CD4-positive, alpha-beta memory T cell (primary cell): ENCODE measurements at regions of chr15 and their contacts with region 1.

Region 1: DNA sequence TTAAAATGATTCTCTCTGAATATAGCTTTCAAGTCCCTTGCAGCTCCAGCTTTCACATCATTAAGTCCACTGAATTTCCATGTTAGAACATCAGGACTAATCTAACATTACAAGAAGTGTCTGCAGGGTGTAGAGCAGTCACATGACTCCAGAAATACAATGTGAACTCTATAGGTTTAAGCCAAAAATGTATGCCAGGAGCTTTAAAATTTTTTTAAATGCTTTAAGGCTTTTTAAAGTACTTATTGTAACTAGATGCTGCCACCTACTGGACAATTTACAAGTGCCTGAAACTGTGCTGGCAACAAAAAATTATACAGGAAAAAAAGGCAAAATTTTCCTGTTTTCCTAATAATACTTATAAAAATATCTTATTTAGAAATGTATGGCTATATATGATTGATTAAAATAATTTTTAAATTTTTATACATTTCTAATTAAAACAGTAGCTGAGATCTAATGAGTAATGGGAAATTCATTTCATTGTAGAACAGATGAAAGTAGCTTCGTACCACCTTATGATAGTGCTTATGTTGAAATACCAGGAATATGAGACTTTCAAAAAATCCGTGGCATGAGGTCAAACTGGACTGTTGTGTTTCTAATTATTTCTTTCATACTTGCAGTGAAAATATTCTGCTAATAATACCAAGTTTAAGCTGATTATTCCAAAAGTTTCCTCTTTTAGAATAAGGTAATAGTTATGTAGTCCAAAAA is 25.7 kb downstream of the FSIP1 start:
- DNase-seq: peak in 4 of 5 donors; percentile 50 to 56 (median 54)
- H3K4me3 ChIP-seq: no peak overlapping the region
- H3K4me3 Mint-ChIP-seq: no peak overlapping the region
- H3K27ac ChIP-seq: no peak overlapping the region
- H3K27ac Mint-ChIP-seq: no peak overlapping the region
- H3K4me1 ChIP-seq: no peaks in the 10 kb centered on the region
- H3K4me1 Mint-ChIP-seq: no peaks in the 10 kb centered on the region
- H3K27me3 ChIP-seq: no peaks in the 10 kb centered on the region
- H3K27me3 Mint-ChIP-seq: peaks cover 0 to 3% of the 10 kb centered on the region in 2 donors

Region 2: DNA sequence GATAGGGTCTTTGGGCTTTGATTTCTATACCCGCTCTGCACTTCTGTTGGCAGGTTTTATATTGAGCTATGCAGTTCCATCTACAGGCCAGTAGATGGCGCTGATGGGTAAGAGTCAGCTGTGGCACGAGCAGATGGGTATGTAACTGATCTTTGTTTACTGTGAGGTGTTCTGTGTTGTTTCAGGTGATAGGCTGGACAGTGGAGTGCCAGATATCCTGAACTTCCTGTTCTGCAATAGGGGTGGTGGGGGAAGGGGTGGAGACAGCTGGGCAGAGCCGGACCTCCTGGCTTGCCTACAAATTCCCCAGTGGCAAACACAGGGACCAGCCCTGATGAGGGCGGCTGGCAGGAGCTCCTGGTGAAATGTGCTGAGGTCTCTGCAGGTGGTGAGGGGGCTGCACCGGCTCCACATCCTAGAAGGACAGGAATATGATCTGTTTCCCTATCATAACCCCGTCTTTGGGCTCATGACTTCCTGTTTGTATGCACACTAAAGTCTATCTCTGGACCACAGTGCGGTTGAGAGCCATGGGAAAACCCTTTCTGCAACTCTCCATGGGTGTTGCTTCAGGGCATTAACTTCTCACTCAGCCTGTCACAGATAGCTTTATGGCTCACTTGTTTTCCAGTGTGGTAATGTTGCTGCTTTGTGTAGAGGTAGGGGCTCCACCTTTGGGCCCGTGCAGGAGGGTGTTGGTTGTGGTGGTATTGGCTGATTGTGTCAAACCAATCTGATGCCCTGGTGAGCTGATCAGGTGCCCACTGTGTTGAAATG is 1316.4 kb before region 1 on chr15:
- CTCF ChIA-PET with region 1: interaction called, 6 read pairs
- POLR2A ChIA-PET with region 1: no interaction called
- intact Hi-C with region 1: loop called (anchors 10 kb)
- DNase-seq: peak in 4 of 5 donors; percentile 59 to 66 (median 62)
- H3K4me3 ChIP-seq: no peak overlapping the region
- H3K4me3 Mint-ChIP-seq: peak overlapping the region in 1 of 8 donors; percentile 55
- H3K27ac ChIP-seq: no peak overlapping the region
- H3K27ac Mint-ChIP-seq: peak overlapping the region in 1 of 7 donors; percentile 12
- H3K4me1 ChIP-seq: peaks cover 5% of the 10 kb centered on the region
- H3K4me1 Mint-ChIP-seq: peaks cover 0 to 7% (median 3%) of the 10 kb centered on the region in 4 donors
- H3K27me3 ChIP-seq: no peaks in the 10 kb centered on the region
- H3K27me3 Mint-ChIP-seq: peaks cover 20 to 21% of the 10 kb centered on the region in 2 donors

Region 3: DNA sequence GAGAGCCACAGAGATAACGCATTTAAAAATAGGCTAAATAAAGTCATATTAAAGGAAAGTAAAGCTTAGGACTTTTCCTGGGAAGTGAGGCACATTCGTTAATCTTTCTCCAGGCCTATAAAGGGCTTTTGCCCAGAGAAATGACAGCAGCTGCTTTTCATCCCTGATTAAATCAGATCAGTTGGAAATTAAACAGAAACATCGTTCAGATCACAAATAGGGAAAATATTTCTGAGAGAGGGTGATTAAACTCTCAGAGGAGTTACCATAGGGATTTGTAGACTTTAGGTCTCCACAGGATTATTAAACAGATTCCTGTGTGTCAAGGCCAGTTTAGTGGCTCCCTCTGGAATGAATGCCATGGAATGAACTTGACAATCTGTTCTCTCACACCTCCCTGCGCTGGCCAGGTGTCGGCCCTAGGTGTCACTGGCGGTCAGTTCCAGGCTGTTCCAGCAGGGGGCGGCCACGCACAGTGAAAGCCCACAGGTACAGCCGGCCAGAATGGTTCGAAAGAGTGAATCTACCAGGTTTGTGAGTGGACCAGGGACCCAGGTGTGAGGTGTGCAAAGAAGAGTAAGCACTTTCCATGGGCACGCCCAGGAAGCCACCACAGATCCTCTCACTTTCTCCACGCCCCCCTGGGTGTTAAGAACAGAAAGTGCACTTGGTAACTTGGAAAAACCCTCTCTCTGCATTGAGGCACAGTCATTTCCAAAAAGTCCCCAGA is 939.4 kb before region 1 on chr15:
- CTCF ChIA-PET with region 1: interaction called, 21 read pairs
- POLR2A ChIA-PET with region 1: no interaction called
- intact Hi-C with region 1: loop called (anchors 1 kb)
- DNase-seq: peak; percentile 69 to 78 (median 73)
- H3K4me3 ChIP-seq: no peak overlapping the region
- H3K4me3 Mint-ChIP-seq: peak overlapping the region in 4 of 8 donors; percentile 17 to 52 (median 20)
- H3K27ac ChIP-seq: no peak overlapping the region
- H3K27ac Mint-ChIP-seq: no peak overlapping the region
- H3K4me1 ChIP-seq: no peaks in the 10 kb centered on the region
- H3K4me1 Mint-ChIP-seq: peaks cover 0 to 5% (median 2%) of the 10 kb centered on the region in 4 donors
- H3K27me3 ChIP-seq: no peaks in the 10 kb centered on the region
- H3K27me3 Mint-ChIP-seq: peaks cover 0 to 2% of the 10 kb centered on the region in 2 donors

Region 4: GRCh38 chr15:39586387-39587171 is 170.4 kb before region 1 on chr15:
- CTCF ChIA-PET with region 1: interaction called, 83 read pairs
- POLR2A ChIA-PET with region 1: interaction called, 7 read pairs
- intact Hi-C with region 1: loop called (anchors 1 kb)
- DNase-seq: no peak
- H3K4me3 ChIP-seq: no peak overlapping the region
- H3K4me3 Mint-ChIP-seq: no peak overlapping the region
- H3K27ac ChIP-seq: no peak overlapping the region
- H3K27ac Mint-ChIP-seq: peak overlapping the region in 1 of 7 donors; percentile 7
- H3K4me1 ChIP-seq: no peaks in the 10 kb centered on the region
- H3K4me1 Mint-ChIP-seq: peaks cover 2 to 37% (median 11%) of the 10 kb centered on the region in 4 donors
- H3K27me3 ChIP-seq: no peaks in the 10 kb centered on the region
- H3K27me3 Mint-ChIP-seq: no peaks in the 10 kb centered on the region

Region 5: GRCh38 chr15:39686000-39686613 is 70.9 kb before region 1 on chr15:
- CTCF ChIA-PET with region 1: interaction called, 41 read pairs
- POLR2A ChIA-PET with region 1: interaction called, 4 read pairs
- intact Hi-C with region 1: loop called (anchors 1 kb)
- DNase-seq: peak in 4 of 5 donors; percentile 28 to 36 (median 31)
- H3K4me3 ChIP-seq: no peak overlapping the region
- H3K4me3 Mint-ChIP-seq: no peak overlapping the region
- H3K27ac ChIP-seq: no peak overlapping the region
- H3K27ac Mint-ChIP-seq: no peak overlapping the region
- H3K4me1 ChIP-seq: no peaks in the 10 kb centered on the region
- H3K4me1 Mint-ChIP-seq: peaks cover 0 to 15% (median 4%) of the 10 kb centered on the region in 4 donors
- H3K27me3 ChIP-seq: no peaks in the 10 kb centered on the region
- H3K27me3 Mint-ChIP-seq: peaks cover 0 to 1% of the 10 kb centered on the region in 2 donors

Region 6: DNA sequence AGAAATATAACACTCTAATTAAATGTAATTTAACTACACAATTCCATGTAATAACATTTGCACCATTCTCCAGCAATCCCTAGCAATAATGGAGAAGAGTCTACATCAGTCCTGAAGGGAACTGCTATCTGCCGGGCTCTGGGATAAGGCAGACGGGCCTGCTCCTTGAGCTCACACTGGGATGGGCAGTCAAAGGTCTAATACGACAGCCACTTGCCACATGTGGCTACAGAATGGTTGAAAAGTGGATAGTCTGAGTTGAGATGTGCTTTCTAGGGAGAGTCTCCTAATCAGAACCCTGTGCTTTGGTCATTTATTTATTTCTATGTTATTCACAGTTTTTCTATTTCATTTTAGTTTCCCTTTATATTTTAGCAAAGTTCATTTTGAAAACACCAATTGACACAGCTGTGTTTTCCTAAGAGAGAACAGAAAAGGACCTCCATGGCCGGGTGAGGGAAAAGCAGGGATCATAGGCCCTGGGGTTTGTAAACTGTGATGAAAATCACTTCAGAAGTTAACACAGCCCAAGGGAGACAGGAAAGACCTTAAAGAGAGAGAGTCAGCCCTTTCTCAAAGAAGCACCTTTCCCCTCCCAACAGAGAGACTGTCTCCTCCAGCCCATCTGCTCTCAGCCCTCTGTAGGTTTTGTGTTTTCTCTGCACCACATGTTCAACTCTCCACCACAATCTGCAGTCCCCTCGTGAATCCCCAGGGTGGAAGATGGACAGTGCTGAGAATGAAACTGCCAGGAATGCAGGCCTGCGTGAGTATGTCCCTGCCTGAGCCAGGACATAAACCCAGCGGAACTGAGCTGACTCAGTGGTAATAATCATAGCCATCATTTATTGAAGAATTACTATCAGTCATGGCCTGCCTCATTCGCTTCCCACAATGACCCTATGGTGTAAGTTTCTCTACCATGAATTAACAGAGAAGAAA is 14.1 kb after region 1 on chr15:
- CTCF ChIA-PET with region 1: interaction called, 26 read pairs
- POLR2A ChIA-PET with region 1: interaction called, 3 read pairs
- intact Hi-C with region 1: no loop called
- DNase-seq: no peak
- H3K4me3 ChIP-seq: no peak overlapping the region
- H3K4me3 Mint-ChIP-seq: no peak overlapping the region
- H3K27ac ChIP-seq: no peak overlapping the region
- H3K27ac Mint-ChIP-seq: peak overlapping the region in 2 of 7 donors; percentile 62 to 84
- H3K4me1 ChIP-seq: peaks cover 15% of the 10 kb centered on the region
- H3K4me1 Mint-ChIP-seq: peaks cover 9 to 24% (median 14%) of the 10 kb centered on the region in 4 donors
- H3K27me3 ChIP-seq: no peaks in the 10 kb centered on the region
- H3K27me3 Mint-ChIP-seq: peaks cover 0 to 1% of the 10 kb centered on the region in 2 donors